Common myeloid progenitor, CD34-positive (primary cell): ENCODE measurements at regions of chr3 and their contacts with region 1.

Region 1: DNA sequence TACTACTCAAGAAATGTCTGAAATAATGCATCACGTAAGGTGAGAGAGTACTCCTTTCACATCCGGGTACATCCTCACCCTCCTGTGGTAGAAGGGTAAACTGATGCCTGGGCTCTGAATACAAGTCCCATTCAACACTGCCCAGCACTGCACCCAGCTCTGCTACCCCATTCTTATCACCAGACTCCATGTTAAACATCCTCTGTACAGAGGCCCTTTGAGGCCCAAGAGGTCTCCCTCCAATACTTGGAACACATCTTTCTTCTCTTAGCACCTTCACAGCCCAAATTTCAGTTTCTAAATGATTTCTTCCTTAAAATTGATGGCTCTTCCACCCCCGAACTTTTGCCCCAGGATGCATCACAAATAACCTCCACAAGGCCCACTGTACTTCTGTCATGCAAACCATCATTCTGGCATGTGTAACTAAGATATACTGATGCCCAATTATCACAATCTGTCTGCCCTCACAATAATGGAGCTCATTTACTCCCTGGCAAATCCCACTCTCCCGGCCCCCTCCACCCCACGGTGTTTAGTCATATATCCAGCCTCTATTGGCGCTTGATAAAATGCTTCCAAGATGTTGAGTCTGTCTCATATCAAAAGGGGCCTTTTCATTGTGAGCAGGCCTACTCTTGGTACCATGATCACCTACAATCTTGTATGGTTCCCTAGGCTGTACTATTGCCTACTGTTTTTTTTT is 12.6 kb upstream of the GPX1 start:
- DNase-seq: no peak
- H3K4me3 ChIP-seq: no peak overlapping the region
- H3K27ac ChIP-seq: no peak overlapping the region
- H3K4me1 ChIP-seq: no peaks in the 10 kb centered on the region
- H3K27me3 ChIP-seq: no peaks in the 10 kb centered on the region

Region 2: GRCh38 chr3:49358217-49358883 is 12.4 kb before region 1 on chr3 and contains the start of gene GPX1:
- CTCF ChIA-PET with region 1: interaction called, 10 read pairs
- POLR2A ChIA-PET with region 1: no interaction called
- DNase-seq: peak; percentile 82 to 91 (median 88)
- H3K4me3 ChIP-seq: peak within 1 kb of the TSS; percentile 64 to 96 (median 86)
- H3K27ac ChIP-seq: peak within 1 kb of the TSS; percentile 92 to 93
- H3K4me1 ChIP-seq: peaks cover 13 to 42% (median 33%) of the 10 kb centered on the region in 4 experiments
- H3K27me3 ChIP-seq: no peaks in the 10 kb centered on the region

Region 3: GRCh38 chr3:49500732-49501609 is 130.2 kb after region 1 on chr3:
- CTCF ChIA-PET with region 1: no interaction called
- POLR2A ChIA-PET with region 1: no interaction called
- DNase-seq: peak; percentile 25 to 68 (median 46)
- H3K4me3 ChIP-seq: no peak overlapping the region
- H3K27ac ChIP-seq: peak overlapping the region in 1 of 2 experiments; percentile 35
- H3K4me1 ChIP-seq: peaks cover 0 to 2% (median 0%) of the 10 kb centered on the region in 4 experiments
- H3K27me3 ChIP-seq: no peaks in the 10 kb centered on the region